ENCODE measurements at regions of chr3 and their contacts with region 1.

Region 1: GRCh38 chr3:115147329-115148141 is 447 bp upstream of the ZBTB20 start:
- DNase-seq: peak; percentile 98 to 99
- ATAC-seq: peak; percentile 86 to 89 (median 87)
- H3K4me3 ChIP-seq: peak overlapping the region; percentile 79
- H3K27ac ChIP-seq: peak overlapping the region; percentile 96
- H3K4me1 ChIP-seq: peaks cover 33% of the 10 kb centered on the region
- H3K27me3 ChIP-seq: no peaks in the 10 kb centered on the region
- CTCF ChIP-seq: no peak

Region 2: GRCh38 chr3:114350271-114350670 is 797.3 kb before region 1 on chr3:
- intact Hi-C with region 1: no loop called
- DNase-seq: no peak
- ATAC-seq: peak in 2 of 4 donors; percentile 7 to 43
- H3K4me3 ChIP-seq: no peak overlapping the region
- H3K27ac ChIP-seq: no peak overlapping the region
- H3K4me1 ChIP-seq: no peaks in the 10 kb centered on the region
- H3K27me3 ChIP-seq: no peaks in the 10 kb centered on the region
- CTCF ChIP-seq: no peak

Region 3: GRCh38 chr3:114879059-114880031 is 268.2 kb before region 1 on chr3:
- intact Hi-C with region 1: no loop called
- DNase-seq: no peak
- ATAC-seq: peak; percentile 53 to 70 (median 62)
- H3K4me3 ChIP-seq: peak overlapping the region; percentile 38
- H3K27ac ChIP-seq: peak overlapping the region; percentile 48
- H3K4me1 ChIP-seq: peaks cover 59% of the 10 kb centered on the region
- H3K27me3 ChIP-seq: no peaks in the 10 kb centered on the region
- CTCF ChIP-seq: no peak

Region 4: GRCh38 chr3:115100806-115101205 is 46.7 kb before region 1 on chr3:
- intact Hi-C with region 1: loop called (anchors 2 to 5 kb)
- DNase-seq: no peak
- ATAC-seq: peak in 3 of 4 donors; percentile 37 to 46 (median 46)
- H3K4me3 ChIP-seq: peak overlapping the region; percentile 68
- H3K27ac ChIP-seq: peak overlapping the region; percentile 83
- H3K4me1 ChIP-seq: peaks cover 40% of the 10 kb centered on the region
- H3K27me3 ChIP-seq: no peaks in the 10 kb centered on the region
- CTCF ChIP-seq: no peak

Measured in psoas muscle (tissue), 8 donors.